ENCODE measurements at regions of chrX and their contacts with region 1.

Region 1: DNA sequence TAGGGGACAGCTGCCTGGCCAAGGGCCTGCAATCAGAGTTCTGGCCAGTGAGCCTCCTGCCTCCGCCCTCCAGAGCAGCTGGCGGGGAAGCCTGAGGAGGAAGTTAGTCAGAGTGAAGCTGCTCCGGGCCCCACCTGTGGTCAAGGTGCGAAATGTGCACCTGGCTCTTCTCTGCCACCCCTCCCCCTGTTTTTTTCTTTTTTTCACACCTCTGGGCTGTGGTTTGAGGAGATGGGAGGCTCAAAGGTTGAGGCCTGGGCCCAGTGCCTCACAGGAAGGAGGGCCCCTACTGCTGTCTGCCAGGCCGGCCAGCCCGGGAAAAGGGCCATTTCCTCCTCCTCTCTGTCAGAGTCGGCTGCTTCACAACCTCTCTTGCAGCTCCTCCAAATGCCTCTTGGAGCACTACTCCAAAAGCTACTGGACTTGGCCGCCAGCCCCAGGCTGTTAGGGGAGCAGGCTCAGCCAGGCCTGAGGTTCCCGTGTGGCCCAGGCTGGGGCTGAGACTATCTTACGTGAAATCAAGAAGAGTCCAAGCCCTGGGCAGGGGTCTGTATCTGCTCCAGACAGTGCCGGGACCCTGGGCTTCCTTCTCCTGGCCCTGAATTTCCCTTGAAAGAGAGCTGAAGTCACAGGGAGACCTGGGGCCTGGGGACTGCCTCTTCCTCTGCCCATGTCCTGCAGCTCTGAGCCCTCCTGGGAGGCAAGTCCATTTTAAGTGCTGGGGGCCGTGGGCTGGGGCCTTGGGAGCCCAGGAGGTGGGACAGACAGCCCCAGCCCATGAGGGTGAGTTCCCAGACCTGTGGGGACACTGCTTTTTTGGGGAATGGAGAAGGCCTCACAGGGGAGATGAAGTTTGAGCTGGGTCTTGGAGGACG is 4.5 kb upstream of the CXCR3 start:
- DNase-seq: peak; percentile 87
- ATAC-seq: peak; percentile 63
- H3K4me3 Mint-ChIP-seq: peak overlapping the region; percentile 56
- H3K27ac Mint-ChIP-seq: peak overlapping the region; percentile 90
- H3K4me1 Mint-ChIP-seq: peaks cover 62% of the 10 kb centered on the region
- H3K27me3 Mint-ChIP-seq: no peaks in the 10 kb centered on the region

Region 2: GRCh38 chrX:71637848-71638247 is 15.0 kb after region 1 on chrX:
- CTCF ChIA-PET with region 1: interaction called, 33 read pairs
- DNase-seq: no peak
- ATAC-seq: peak; percentile 57
- H3K4me3 Mint-ChIP-seq: no peak overlapping the region
- H3K27ac Mint-ChIP-seq: no peak overlapping the region
- H3K4me1 Mint-ChIP-seq: peaks cover 15% of the 10 kb centered on the region
- H3K27me3 Mint-ChIP-seq: no peaks in the 10 kb centered on the region

Region 3: DNA sequence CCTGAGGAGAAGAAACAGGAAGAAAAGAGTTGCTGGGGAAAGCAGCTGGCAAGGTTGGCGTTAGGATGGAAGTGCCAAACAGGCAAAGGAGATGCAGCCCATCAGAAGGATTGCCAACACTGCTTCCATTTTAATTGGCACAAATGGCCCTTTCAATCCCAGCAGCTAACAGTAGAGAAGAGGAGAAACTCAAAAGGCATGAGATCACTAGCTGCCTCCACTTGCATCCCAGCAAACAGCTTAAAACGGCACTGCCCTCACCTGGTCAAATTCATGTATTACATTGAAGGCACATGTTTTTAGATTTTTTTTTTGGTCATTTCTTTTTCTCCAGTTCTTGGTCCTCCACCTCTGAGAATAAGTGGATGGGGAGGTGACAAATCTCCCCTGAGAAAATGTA is 29.6 kb after region 1 on chrX:
- CTCF ChIA-PET with region 1: interaction called, 14 read pairs
- DNase-seq: peak; percentile 69
- ATAC-seq: peak; percentile 61
- H3K4me3 Mint-ChIP-seq: no peak overlapping the region
- H3K27ac Mint-ChIP-seq: no peak overlapping the region
- H3K4me1 Mint-ChIP-seq: peaks cover 31% of the 10 kb centered on the region
- H3K27me3 Mint-ChIP-seq: peaks cover 13% of the 10 kb centered on the region

Measured in activated CD8-positive, alpha-beta memory T cell treated with anti-CD3 and anti-CD28 coated beads, Interleukin-2, amount 10 ng/mL, durations not matched to agents 7 days and 5 days (primary cell).